Ascending aorta (tissue), 2 donors: ENCODE measurements at regions of chrX and their contacts with region 1.

Region 1: DNA sequence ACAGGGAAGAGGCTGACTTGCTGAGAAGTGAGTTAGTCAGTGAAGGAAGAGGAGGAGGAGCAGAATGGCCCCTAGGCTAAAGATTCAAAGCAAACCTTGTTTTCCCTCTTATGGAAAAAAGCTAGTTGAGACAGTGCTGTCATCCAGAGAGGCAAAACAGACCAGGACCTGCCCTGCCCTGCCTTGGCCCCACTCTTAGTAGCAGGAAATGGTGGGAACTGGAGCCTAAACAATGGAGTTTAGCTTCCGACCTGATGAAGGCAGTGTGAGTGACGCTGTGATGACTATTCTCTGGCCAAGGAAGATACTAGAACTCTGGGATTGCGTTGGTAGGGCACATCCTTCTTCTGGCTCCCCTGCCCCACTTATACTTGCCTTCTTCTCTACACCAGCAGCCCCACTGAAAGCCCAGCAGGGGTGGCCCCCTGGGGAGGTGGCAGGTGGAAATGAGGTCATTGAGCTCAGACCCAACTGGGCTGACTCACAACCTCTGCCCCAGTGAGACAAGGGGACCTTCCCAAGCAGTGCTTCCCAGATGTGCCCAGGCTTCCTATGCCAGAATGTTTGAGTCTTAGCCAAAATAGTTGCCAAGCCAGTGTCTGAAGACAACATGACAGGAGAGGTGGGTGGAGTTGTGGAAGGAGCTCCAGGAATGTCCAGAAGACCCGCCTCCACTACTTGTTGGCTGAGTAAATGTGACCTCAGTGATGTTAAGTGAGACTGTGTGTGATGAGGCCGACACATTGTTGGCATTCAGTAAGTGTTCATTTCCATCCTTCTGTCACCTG is 38.8 kb downstream of the MSN start:
- DNase-seq: peak in 1 of 2 donors; percentile 85
- H3K4me3 ChIP-seq: no peak overlapping the region
- H3K27ac ChIP-seq: peak overlapping the region; percentile 84 to 85
- H3K4me1 ChIP-seq: peaks cover 14 to 32% of the 10 kb centered on the region in 2 donors
- H3K27me3 ChIP-seq: no peaks in the 10 kb centered on the region
- CTCF ChIP-seq: no peak

Region 2: GRCh38 chrX:65581661-65582339 is 124.4 kb before region 1 on chrX:
- intact Hi-C with region 1: no loop called
- DNase-seq: peak in 1 of 2 donors; percentile 83
- H3K4me3 ChIP-seq: no peak overlapping the region
- H3K27ac ChIP-seq: no peak overlapping the region
- H3K4me1 ChIP-seq: no peaks in the 10 kb centered on the region
- H3K27me3 ChIP-seq: no peaks in the 10 kb centered on the region
- CTCF ChIP-seq: peak; percentile 61 to 87 (median 81)

Region 3: DNA sequence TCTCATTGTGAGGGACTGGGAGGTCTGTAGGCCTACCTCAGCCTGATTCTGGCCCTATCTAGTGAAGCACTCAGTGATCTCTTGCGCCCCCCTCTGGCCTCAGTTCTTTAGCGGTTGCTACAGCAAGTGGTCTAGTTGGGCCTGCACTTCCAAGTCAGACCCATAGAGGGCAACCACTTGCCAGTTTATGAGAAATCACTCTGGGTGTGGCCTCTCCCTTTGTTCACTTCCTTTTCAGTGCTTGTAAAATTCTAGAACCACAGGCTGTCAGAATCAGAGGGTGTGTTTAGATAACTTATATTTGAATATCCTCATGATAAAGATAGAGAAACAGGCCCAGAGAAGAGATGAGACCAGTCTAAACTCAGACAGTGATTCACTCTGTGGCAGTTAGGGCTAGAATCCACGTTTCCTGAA is 110.8 kb before region 1 on chrX:
- intact Hi-C with region 1: loop called (anchors 2 kb)
- DNase-seq: peak; percentile 82 to 99
- H3K4me3 ChIP-seq: no peak overlapping the region
- H3K27ac ChIP-seq: peak overlapping the region; percentile 84 to 89
- H3K4me1 ChIP-seq: peaks cover 0 to 17% of the 10 kb centered on the region in 2 donors
- H3K27me3 ChIP-seq: no peaks in the 10 kb centered on the region
- CTCF ChIP-seq: peak; percentile 99 to 100 (median 99)

Region 4: DNA sequence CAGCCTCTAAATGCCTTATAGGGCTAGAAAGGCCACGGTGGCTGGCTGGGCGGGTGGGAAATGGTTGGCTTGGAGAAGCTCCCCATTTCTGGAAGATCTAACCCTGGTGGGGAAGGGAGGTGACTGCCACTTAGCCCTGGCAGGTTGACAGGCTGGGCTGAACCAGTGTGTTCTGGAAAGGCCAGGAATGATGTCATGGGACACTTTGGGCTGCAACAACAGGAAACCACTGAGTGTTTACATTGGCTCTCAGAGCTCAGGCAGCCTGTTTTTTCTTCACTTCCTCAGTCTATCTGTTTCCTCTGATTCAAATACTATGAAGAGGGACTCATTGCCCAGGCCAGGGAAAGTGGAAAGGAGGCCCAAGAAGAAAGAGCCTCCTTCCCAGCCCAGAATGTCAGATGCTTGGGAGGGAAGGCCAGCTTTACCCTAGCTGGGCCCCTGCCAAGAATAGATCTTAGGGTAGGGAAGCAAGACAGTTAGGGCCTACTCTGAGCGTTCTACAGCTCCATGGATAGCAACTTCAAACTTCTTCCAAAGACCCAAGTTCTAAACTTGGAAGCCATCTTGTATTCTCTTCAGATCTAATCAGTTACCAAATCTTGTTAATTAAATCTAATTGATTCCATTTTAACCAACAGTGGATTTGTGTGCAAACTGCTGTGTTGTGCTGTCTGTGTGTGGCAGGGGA is 104.6 kb before region 1 on chrX:
- intact Hi-C with region 1: loop called (anchors 1 kb)
- DNase-seq: peak; percentile 80 to 96
- H3K4me3 ChIP-seq: no peak overlapping the region
- H3K27ac ChIP-seq: peak overlapping the region; percentile 88 to 89
- H3K4me1 ChIP-seq: peaks cover 10 to 37% of the 10 kb centered on the region in 2 donors
- H3K27me3 ChIP-seq: no peaks in the 10 kb centered on the region
- CTCF ChIP-seq: peak in 2 of 3 experiments; percentile 26 to 38

Region 5: DNA sequence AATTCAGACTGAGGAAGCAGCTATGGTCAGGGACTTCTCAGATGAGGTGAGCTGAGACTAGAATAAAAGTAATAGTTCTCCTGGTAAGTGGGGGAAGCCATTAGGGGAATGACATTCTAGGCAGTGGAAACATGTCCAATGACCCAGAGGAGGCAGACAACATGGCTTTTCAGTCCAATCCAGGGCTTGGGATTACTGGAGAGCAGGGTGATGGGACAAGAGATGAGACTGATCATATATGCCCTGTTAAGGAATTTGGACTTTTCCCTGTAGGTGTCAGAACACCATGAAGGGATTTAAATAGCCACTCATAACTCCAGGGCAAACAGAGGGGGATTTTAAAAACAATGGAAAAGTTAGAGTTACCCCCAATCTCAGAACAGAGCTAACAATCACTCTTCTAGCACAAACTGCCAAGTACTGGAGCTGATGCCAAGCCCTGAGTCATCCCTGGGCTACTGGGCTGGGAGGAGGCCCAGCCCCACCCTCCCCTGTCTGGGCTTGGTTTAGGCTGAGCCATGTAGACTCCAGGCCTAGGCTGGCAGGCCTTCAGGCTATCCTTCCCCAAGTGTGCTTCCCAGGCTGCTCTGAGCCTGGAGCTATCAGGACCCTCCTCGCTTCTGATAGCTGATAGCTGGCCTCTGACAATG is 61.5 kb before region 1 on chrX:
- intact Hi-C with region 1: loop called (anchors 2 kb)
- DNase-seq: peak; percentile 83 to 95
- H3K4me3 ChIP-seq: no peak overlapping the region
- H3K27ac ChIP-seq: peak overlapping the region; percentile 78 to 80
- H3K4me1 ChIP-seq: peaks cover 0 to 29% of the 10 kb centered on the region in 2 donors
- H3K27me3 ChIP-seq: no peaks in the 10 kb centered on the region
- CTCF ChIP-seq: no peak

Region 6: DNA sequence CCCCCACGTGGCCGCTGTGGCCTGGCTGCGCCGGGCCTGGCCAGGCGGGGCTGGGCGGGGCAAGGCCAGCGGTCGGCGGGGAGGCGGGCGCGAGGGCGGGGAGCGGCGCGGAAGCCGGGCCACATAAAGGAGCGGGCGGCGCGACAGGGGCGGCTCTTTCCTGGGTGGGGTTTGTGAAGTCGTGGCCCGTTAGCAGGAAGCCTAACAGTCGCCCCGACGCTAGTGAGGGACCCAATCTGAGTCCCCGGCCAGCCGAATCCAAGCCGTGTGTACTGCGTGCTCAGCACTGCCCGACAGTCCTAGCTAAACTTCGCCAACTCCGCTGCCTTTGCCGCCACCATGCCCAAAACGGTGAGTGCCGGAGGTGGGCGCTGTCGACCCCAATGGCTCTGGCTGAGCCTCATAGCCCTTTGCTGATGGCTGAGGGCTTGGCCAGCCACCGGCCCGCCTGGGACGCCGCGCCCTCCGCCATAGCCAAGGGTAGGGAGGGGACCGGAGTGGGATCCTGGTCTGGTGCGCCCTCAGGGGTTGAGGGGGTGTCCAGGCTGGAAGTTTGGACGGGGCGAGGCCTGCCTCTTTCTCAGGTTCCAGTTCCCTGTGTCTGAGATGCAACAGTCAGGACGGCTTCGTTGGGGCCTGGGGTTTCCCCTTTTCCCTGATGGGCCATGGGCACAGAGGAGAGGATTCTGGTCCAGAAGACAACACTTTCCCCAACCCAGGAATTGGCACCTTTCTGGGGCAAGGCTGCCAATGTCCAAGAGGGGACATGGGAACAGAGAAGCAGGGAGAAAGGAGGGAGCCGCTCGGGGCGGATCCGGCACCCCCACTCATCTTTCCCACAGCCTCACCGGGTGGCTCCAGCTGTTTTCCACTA is 38.5 kb before region 1 on chrX and contains the start of gene MSN:
- intact Hi-C with region 1: loop called (anchors 2 kb)
- DNase-seq: peak in 1 of 2 donors; percentile 85
- H3K4me3 ChIP-seq: peak within 1 kb of the TSS; percentile 73 to 74
- H3K27ac ChIP-seq: peak within 1 kb of the TSS; percentile 91 to 99
- H3K4me1 ChIP-seq: peaks cover 0 to under 1% of the 10 kb centered on the region in 2 donors
- H3K27me3 ChIP-seq: no peaks in the 10 kb centered on the region
- CTCF ChIP-seq: no peak
- total RNA-seq, gene MSN: 338 TPM

Region 7: GRCh38 chrX:65726710-65727109 is 20.5 kb after region 1 on chrX:
- intact Hi-C with region 1: no loop called
- DNase-seq: no peak
- H3K4me3 ChIP-seq: no peak overlapping the region
- H3K27ac ChIP-seq: no peak overlapping the region
- H3K4me1 ChIP-seq: no peaks in the 10 kb centered on the region
- H3K27me3 ChIP-seq: no peaks in the 10 kb centered on the region
- CTCF ChIP-seq: no peak